Activated T-helper 1 cell treated with anti-CD3 and anti-CD28 coated beads, Interleukin-12 subunit alpha, Interleukin-12 subunit beta, Interleukin-2, Interleukin-4 antibody, amounts not matched to agents 30 ng/mL and 10 ng/mL and 1 ng/mL, durations not matched to agents 14 hours and 24 hours and 36 hours (primary cell): ENCODE measurements at regions of chr18 and their contacts with region 1.

Region 1: GRCh38 chr18:11908182-11909060 is at the start of gene MPPE1:
- DNase-seq: peak; percentile 87
- H3K4me3 Mint-ChIP-seq: peak within 1 kb of the TSS; percentile 94
- H3K27ac Mint-ChIP-seq: peak within 1 kb of the TSS; percentile 93
- H3K4me1 Mint-ChIP-seq: peaks cover 32% of the 10 kb centered on the region
- H3K27me3 Mint-ChIP-seq: no peaks in the 10 kb centered on the region
- total RNA-seq, gene MPPE1: 45.8 and 47.4 TPM in 2 replicates

Region 2: GRCh38 chr18:10530852-10531251 is 1377.6 kb before region 1 on chr18:
- intact Hi-C with region 1: loop called (anchors 2 kb)
- DNase-seq: no peak
- H3K4me3 Mint-ChIP-seq: peak overlapping the region; percentile 78
- H3K27ac Mint-ChIP-seq: peak overlapping the region; percentile 97
- H3K4me1 Mint-ChIP-seq: peaks cover 41% of the 10 kb centered on the region
- H3K27me3 Mint-ChIP-seq: no peaks in the 10 kb centered on the region

Region 3: GRCh38 chr18:11891737-11892136 is 16.7 kb before region 1 on chr18:
- intact Hi-C with region 1: no loop called
- DNase-seq: no peak
- H3K4me3 Mint-ChIP-seq: no peak overlapping the region
- H3K27ac Mint-ChIP-seq: no peak overlapping the region
- H3K4me1 Mint-ChIP-seq: no peaks in the 10 kb centered on the region
- H3K27me3 Mint-ChIP-seq: no peaks in the 10 kb centered on the region

Region 4: GRCh38 chr18:11947214-11948191 is 39.1 kb after region 1 on chr18:
- intact Hi-C with region 1: loop called (anchors 2 kb)
- DNase-seq: peak; percentile 43
- H3K4me3 Mint-ChIP-seq: peak overlapping the region; percentile 70
- H3K27ac Mint-ChIP-seq: peak overlapping the region; percentile 53
- H3K4me1 Mint-ChIP-seq: peaks cover 5% of the 10 kb centered on the region
- H3K27me3 Mint-ChIP-seq: no peaks in the 10 kb centered on the region

Region 5: GRCh38 chr18:11972371-11973174 is 64.2 kb after region 1 on chr18:
- intact Hi-C with region 1: no loop called
- DNase-seq: no peak
- H3K4me3 Mint-ChIP-seq: no peak overlapping the region
- H3K27ac Mint-ChIP-seq: no peak overlapping the region
- H3K4me1 Mint-ChIP-seq: no peaks in the 10 kb centered on the region
- H3K27me3 Mint-ChIP-seq: peaks cover 7% of the 10 kb centered on the region

Region 6: GRCh38 chr18:12308386-12309100 is 400.1 kb after region 1 on chr18:
- intact Hi-C with region 1: loop called (anchors 5 kb)
- DNase-seq: peak; percentile 21
- H3K4me3 Mint-ChIP-seq: peak overlapping the region; percentile 80
- H3K27ac Mint-ChIP-seq: peak overlapping the region; percentile 76
- H3K4me1 Mint-ChIP-seq: peaks cover 19% of the 10 kb centered on the region
- H3K27me3 Mint-ChIP-seq: peaks cover 32% of the 10 kb centered on the region

Region 7: DNA sequence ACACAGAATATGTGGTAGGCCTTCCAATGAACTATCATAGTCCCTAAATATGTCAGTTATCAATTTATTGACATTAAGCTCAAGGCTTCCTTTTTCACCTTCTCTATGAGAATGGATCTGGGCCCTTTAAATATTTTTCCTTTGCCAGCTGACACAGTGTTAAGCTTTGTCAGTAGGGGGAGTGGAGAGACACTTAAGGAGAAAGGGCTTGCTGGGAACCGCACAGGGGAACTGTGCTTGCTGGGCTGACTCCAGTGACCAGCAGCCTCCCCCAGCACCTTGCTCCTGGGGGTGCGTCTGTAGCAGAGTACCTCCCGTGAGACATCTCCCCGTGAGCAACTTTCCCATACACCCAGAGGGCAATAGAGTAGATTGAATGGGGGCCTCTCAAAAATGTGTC is 982.1 kb after region 1 on chr18:
- intact Hi-C with region 1: loop called (anchors 5 kb)
- DNase-seq: no peak
- H3K4me3 Mint-ChIP-seq: no peak overlapping the region
- H3K27ac Mint-ChIP-seq: no peak overlapping the region
- H3K4me1 Mint-ChIP-seq: peaks cover 33% of the 10 kb centered on the region
- H3K27me3 Mint-ChIP-seq: peaks cover 7% of the 10 kb centered on the region

Region 8: DNA sequence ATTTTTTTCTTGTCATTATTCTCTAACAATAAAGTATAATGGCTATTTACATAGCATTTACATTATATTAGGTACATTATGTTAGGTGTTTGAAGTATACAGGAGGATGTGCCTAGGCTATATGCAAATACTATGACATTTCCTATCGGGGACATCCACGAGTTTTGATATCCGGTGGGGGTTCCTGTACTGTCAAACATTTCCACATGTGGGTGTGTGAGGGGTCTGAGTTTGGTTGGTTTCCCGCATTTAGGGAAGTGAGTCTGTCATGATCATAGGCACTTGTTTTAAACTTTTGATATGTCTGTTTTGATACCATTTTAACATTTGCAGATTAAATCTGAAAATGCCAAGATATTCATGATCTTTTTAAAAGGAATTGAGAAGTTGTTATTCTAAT is 1158.7 kb after region 1 on chr18:
- intact Hi-C with region 1: no loop called
- DNase-seq: no peak
- H3K4me3 Mint-ChIP-seq: no peak overlapping the region
- H3K27ac Mint-ChIP-seq: peak overlapping the region; percentile 40
- H3K4me1 Mint-ChIP-seq: peaks cover 8% of the 10 kb centered on the region
- H3K27me3 Mint-ChIP-seq: no peaks in the 10 kb centered on the region